ENCODE measurements at regions of chr13 and their contacts with region 1.

Region 1: GRCh38 chr13:29805994-29806979 is 44.1 kb downstream of the UBL3 start:
- DNase-seq: peak; percentile 61
- H3K4me3 Mint-ChIP-seq: no peak overlapping the region
- H3K27ac Mint-ChIP-seq: no peak overlapping the region
- H3K4me1 Mint-ChIP-seq: peaks cover 43% of the 10 kb centered on the region
- H3K27me3 Mint-ChIP-seq: no peaks in the 10 kb centered on the region

Region 2: DNA sequence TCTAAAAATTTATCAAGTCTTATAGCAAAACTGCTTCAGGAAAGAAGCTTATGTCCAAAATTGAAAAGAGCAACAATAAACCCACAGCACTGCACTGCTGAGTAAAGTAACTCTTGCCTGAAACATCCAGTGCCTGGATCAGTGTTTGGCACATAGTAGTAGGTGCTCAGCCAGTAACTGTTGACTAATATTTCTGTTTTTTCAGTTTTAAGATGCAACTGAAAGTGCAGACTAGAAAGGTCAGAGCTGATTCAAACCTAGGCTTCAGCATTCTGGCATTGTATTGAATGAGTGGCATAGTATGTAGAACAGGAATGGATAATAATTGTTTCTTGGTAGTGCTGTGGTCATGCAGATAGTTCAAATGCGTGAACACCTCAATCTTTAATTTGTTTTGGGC is 23.5 kb before region 1 on chr13:
- CTCF ChIA-PET with region 1: interaction called, 5 read pairs
- POLR2A ChIA-PET with region 1: interaction called, 4 read pairs
- intact Hi-C with region 1: loop called (anchors 2 kb)
- DNase-seq: peak; percentile 40
- H3K4me3 Mint-ChIP-seq: no peak overlapping the region
- H3K27ac Mint-ChIP-seq: peak overlapping the region; percentile 81
- H3K4me1 Mint-ChIP-seq: peaks cover 41% of the 10 kb centered on the region
- H3K27me3 Mint-ChIP-seq: no peaks in the 10 kb centered on the region

Region 3: GRCh38 chr13:29791997-29792780 is 14.1 kb before region 1 on chr13:
- CTCF ChIA-PET with region 1: no interaction called
- POLR2A ChIA-PET with region 1: no interaction called
- intact Hi-C with region 1: loop called (anchors 1 kb)
- DNase-seq: no peak
- H3K4me3 Mint-ChIP-seq: no peak overlapping the region
- H3K27ac Mint-ChIP-seq: no peak overlapping the region
- H3K4me1 Mint-ChIP-seq: peaks cover 60% of the 10 kb centered on the region
- H3K27me3 Mint-ChIP-seq: no peaks in the 10 kb centered on the region